ENCODE measurements at regions of chr12 and their contacts with region 1.

Region 1: GRCh38 chr12:75505706-75506312 is 5.6 kb downstream of the KRR1 start:
- DNase-seq: no peak
- ATAC-seq: no peak
- H3K4me3 ChIP-seq: no peak overlapping the region
- H3K27ac ChIP-seq: no peak overlapping the region
- H3K4me1 ChIP-seq: peaks cover 24% of the 10 kb centered on the region
- H3K27me3 ChIP-seq: no peaks in the 10 kb centered on the region
- CTCF ChIP-seq: peak; percentile 46

Region 2: GRCh38 chr12:75334384-75335030 is 171.3 kb before region 1 on chr12 and contains the start of gene GLIPR1L1:
- intact Hi-C with region 1: loop called in 1 of 2 experiments (anchors 5 kb)
- DNase-seq: peak; percentile 79 to 81
- ATAC-seq: peak; percentile 75 to 81 (median 78)
- H3K4me3 ChIP-seq: peak within 1 kb of the TSS; percentile 51
- H3K27ac ChIP-seq: no peak within 1 kb of the TSS
- H3K4me1 ChIP-seq: peaks cover 3% of the 10 kb centered on the region
- H3K27me3 ChIP-seq: no peaks in the 10 kb centered on the region
- CTCF ChIP-seq: peak; percentile 91
- total RNA-seq, gene GLIPR1L1: not detected

Region 3: GRCh38 chr12:76356094-76356493 is 850.3 kb after region 1 on chr12:
- intact Hi-C with region 1: loop called in 1 of 2 experiments (anchors 10 kb)
- DNase-seq: no peak
- ATAC-seq: no peak
- H3K4me3 ChIP-seq: no peak overlapping the region
- H3K27ac ChIP-seq: no peak overlapping the region
- H3K4me1 ChIP-seq: no peaks in the 10 kb centered on the region
- H3K27me3 ChIP-seq: no peaks in the 10 kb centered on the region
- CTCF ChIP-seq: no peak

Measured in psoas muscle (tissue), 8 donors.